Activated CD4-positive, alpha-beta T cell treated with anti-CD3 and anti-CD28 coated beads, Interleukin-2, amount 10 ng/mL, durations not matched to agents 7 days and 5 days (primary cell): ENCODE measurements at regions of chr10 and their contacts with region 1.

Region 1: GRCh38 chr10:107043461-107043860 is 121.0 kb downstream of the SORCS1 start:
- DNase-seq: no peak
- H3K4me3 Mint-ChIP-seq: no peak overlapping the region
- H3K27ac Mint-ChIP-seq: no peak overlapping the region
- H3K4me1 Mint-ChIP-seq: no peaks in the 10 kb centered on the region
- H3K27me3 Mint-ChIP-seq: no peaks in the 10 kb centered on the region

Region 2: DNA sequence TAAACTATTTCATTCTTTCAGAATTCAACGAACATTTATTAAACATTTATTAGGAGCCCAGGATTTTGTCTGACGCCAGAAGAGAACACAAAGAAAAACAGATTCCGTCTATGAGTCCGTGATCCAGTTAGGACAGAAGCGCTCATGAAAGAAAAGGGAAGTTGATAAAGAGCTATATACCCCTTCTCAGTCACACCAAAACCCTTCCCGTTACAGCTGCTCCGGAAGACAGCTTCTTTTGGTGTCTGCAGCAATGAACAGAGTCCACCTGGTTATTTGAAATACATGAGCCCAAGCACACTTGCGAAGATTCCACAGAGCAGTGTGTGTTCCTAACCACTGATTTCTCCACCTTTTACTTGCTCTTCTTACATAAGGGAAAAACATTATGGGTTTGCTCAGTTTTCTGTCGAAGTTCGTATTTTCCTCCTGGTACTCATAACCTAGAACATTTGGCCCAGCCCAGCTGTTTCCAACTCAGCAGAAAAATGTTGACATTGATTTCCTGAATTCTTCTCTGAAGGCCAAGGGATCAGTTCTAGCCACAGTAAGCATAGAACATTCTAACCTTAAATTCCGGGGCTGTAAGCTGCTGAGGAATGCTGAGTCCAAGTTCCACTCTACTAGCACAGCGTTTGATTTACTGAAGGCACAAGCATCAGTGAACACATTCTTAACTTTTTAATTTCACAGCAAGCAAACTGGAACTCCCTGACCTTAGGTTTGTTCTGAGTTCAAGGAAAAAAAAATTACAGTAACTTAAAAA is 85.5 kb before region 1 on chr10:
- CTCF ChIA-PET with region 1: no interaction called
- POLR2A ChIA-PET with region 1: interaction called, 10 read pairs
- DNase-seq: no peak
- H3K4me3 Mint-ChIP-seq: no peak overlapping the region
- H3K27ac Mint-ChIP-seq: no peak overlapping the region
- H3K4me1 Mint-ChIP-seq: no peaks in the 10 kb centered on the region
- H3K27me3 Mint-ChIP-seq: no peaks in the 10 kb centered on the region